BJ (cell line): ENCODE measurements at regions of chr19 and their contacts with region 1.

Region 1: GRCh38 chr19:38523319-38523718 is 89.8 kb downstream of the RYR1 start:
- DNase-seq: no peak
- H3K4me3 ChIP-seq: no peak overlapping the region
- H3K27me3 ChIP-seq: no peaks in the 10 kb centered on the region
- CTCF ChIP-seq: no peak

Region 2: GRCh38 chr19:38319421-38320258 is 203.7 kb before region 1 on chr19 and contains the start of gene KCNK6:
- CTCF ChIA-PET with region 1: no interaction called
- POLR2A ChIA-PET with region 1: no interaction called
- DNase-seq: no peak
- H3K4me3 ChIP-seq: peak within 1 kb of the TSS; percentile 72
- H3K27me3 ChIP-seq: no peaks in the 10 kb centered on the region
- CTCF ChIP-seq: no peak
- polyA plus RNA-seq, gene KCNK6: 15.6 and 16.5 TPM in 2 replicates

Region 3: GRCh38 chr19:38538386-38538785 is 15.1 kb after region 1 on chr19:
- CTCF ChIA-PET with region 1: no interaction called
- POLR2A ChIA-PET with region 1: no interaction called
- DNase-seq: no peak
- H3K4me3 ChIP-seq: no peak overlapping the region
- H3K27me3 ChIP-seq: no peaks in the 10 kb centered on the region
- CTCF ChIP-seq: no peak

Region 4: DNA sequence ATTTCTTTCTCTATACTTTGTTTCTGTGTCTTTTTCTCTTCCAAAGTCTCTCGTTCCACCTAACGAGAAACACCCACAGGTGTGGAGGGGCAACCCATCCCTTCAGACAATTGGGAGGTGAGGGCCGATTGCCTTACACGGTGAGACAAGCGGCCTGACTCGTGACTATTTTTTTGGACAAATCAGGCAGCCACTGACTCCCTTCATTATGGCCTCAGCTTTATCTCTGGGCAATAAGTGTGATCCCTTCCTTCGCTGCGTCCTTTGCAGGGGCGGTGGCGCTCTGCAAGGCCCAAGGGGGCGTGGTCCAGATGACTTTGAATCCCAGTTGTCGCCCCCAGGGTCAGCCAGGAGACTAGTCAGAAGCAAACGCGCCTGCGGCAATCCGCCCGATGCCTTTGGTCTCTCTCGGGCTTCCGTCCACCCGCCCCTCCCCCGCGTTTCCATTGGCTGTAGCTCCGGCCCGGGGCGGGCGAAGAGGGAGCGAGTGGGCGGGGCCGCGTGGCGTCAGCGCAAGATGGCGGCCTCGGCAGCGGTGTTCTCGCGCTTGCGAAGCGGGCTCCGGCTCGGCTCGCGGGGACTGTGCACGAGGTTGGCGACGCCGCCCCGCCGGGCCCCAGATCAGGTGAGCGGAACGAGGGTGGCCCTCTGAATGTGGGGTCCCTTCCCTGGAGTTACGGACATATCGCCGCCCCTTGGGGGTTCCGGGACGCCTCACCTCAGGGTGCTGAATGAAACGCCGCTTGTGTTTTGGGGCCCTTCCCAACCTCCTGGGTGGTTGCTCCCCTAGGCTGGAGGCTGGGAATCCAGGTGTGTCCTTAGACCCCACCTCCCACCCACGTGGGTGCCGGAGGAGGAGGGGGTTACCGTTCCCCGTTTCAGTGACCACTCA is 957.3 kb after region 1 on chr19 and contains the start of gene TIMM50:
- CTCF ChIA-PET with region 1: no interaction called
- POLR2A ChIA-PET with region 1: interaction called, 14 read pairs
- DNase-seq: peak; percentile 59
- H3K4me3 ChIP-seq: peak within 1 kb of the TSS; percentile 91
- H3K27me3 ChIP-seq: no peaks in the 10 kb centered on the region
- CTCF ChIP-seq: no peak
- polyA plus RNA-seq, gene TIMM50: 86.1 and 97.8 TPM in 2 replicates